GM23248 (cell line): ENCODE measurements at regions of chr1 and their contacts with region 1.

Region 1: DNA sequence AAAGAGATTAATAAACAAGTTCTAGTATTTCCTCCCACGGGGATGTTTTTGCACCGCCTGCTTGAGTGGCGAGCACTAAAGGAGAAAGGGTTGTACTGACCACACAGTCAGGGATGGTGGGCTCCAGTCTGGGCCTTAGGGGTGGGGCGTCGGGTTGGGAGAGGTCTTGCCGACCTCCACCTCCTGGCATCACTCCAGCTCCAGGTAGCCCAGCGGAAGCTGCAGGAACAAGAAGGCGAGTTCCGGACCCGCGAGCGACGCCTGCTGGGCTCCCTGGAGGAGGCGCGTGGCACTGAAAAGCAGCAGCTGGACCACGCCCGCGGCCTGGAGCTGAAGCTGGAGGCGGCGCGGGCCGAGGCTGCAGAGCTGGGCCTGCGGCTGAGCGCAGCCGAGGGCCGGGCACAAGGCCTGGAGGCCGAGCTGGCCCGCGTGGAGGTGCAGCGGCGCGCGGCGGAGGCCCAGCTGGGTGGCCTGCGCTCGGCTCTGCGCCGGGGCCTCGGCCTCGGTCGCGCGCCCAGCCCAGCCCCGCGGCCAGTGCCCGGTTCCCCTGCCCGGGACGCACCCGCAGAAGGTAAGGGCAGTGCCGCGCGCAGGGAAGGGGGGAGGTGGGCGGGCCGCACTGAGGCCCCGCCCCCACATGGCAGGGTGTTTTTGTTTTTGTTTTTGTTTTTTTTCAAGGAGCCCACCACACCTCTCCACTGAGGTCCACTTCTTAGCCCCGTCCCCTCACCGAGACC is 19.7 kb downstream of the MFAP2 start:
- DNase-seq: peak; percentile 96
- H3K4me3 ChIP-seq: peak overlapping the region; percentile 59
- H3K27ac ChIP-seq: no peak overlapping the region
- H3K4me1 ChIP-seq: no peaks in the 10 kb centered on the region
- H3K27me3 ChIP-seq: no peaks in the 10 kb centered on the region

Region 2: DNA sequence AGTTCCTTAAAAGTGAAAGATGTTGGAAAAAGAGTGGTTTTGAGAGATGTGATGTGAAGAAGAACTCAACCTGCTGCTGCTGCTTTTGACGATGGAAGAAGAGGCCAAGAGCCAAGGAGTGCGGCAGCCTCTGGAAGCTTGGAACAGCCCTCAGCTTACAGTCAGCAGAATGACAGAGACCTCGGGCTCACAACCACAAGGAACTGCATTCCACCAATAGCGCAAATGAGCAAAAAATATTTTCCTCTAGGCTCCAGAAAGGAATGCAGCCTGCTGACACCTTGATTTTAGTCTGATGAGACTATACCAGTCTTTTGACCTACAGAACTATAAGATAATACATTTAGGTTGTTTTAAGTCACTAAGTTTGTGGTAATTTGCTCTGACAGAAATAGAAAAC is 82.9 kb after region 1 on chr1:
- in situ Hi-C with region 1: loop called (anchors 5 kb)
- DNase-seq: no peak
- H3K4me3 ChIP-seq: no peak overlapping the region
- H3K27ac ChIP-seq: no peak overlapping the region
- H3K4me1 ChIP-seq: peaks cover 3% of the 10 kb centered on the region; the same call in 1 of the 2 replicates
- H3K27me3 ChIP-seq: no peaks in the 10 kb centered on the region

Region 3: DNA sequence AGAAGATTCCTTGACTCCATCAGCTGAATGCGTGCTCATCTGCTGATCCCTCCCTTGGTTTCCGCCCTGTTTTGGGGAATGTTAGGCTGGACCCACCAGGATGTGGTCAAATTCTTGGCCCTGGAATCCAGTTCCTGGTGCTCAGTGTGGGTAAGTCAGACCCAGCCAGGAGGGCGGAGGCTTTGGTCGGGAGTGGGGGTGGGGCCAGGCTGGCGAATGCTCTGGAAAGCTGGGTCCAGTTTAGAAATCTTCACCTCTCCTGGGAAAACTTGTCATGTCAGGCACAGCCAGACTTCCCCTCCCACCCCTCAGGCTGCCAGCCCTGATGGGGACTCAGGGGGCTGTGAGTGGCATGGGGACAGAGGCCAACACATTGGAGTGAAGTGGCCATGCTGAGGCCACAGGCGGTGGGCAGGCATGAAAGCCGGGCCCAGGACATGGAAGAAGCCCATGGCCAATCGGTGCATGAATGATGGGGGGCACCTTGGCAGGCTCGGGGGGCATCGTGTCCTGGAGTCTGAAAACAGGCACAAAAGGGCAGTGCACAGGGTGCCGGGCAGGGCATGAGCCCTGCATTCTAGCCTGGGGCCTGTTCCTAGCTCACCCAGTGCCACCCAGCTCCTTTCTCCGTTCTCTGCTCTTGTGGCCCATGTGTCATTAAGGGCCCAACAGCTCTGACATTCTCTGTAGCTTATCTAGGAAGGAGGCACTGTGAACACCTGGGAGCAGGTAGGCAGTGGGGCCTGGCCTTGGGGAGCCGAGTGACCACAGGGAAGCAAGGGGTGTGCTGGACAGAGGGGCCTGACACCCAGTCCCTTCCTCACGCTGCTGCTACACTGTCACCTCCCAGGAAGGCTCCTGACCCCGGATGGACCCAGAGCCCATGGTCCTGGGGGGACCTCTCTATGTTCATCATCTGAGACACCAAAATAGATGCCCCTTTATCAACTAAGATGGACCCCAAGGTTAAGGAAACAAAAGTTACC is 229.6 kb after region 1 on chr1:
- in situ Hi-C with region 1: no loop called
- DNase-seq: peak; percentile 98
- H3K4me3 ChIP-seq: peak overlapping the region; percentile 35
- H3K27ac ChIP-seq: peak overlapping the region; percentile 86
- H3K4me1 ChIP-seq: peaks cover 32% of the 10 kb centered on the region
- H3K27me3 ChIP-seq: no peaks in the 10 kb centered on the region